H1 (cell line): ENCODE measurements at regions of chr11 and their contacts with region 1.

Region 1: GRCh38 chr11:82701847-82702520 is 31.7 kb downstream of the FAM181B start:
- DNase-seq: peak in 1 of 2 experiments; percentile 81
- H3K4me3 ChIP-seq: no peak overlapping the region
- H3K27ac ChIP-seq: no peak overlapping the region
- H3K4me1 ChIP-seq: peaks cover 0 to 5% (median 0%) of the 10 kb centered on the region in 4 experiments; a peak in 1 of 7 replicates
- H3K27me3 ChIP-seq: no peaks in the 10 kb centered on the region
- CTCF ChIP-seq: peak in 2 of 3 experiments; percentile 74 to 89; a peak in 3 of 4 replicates
- EP300 ChIP-seq: no peak
- POLR2A ChIP-seq: no peak
- RAD21 ChIP-seq: peak; percentile 79 to 81

Region 2: GRCh38 chr11:81644239-81644840 is 1057.6 kb before region 1 on chr11:
- CTCF ChIA-PET with region 1: interaction called, 23 read pairs
- POLR2A ChIA-PET with region 1: no interaction called
- DNase-seq: no peak
- H3K4me3 ChIP-seq: no peak overlapping the region
- H3K27ac ChIP-seq: no peak overlapping the region
- H3K4me1 ChIP-seq: peaks cover 0 to 9% (median 5%) of the 10 kb centered on the region in 4 experiments; a peak in 6 of 7 replicates
- H3K27me3 ChIP-seq: peaks cover 5 to 32% (median 21%) of the 10 kb centered on the region in 4 experiments
- CTCF ChIP-seq: peak in 2 of 3 experiments; percentile 74 to 95; a peak in 3 of 4 replicates
- EP300 ChIP-seq: no peak
- POLR2A ChIP-seq: no peak
- RAD21 ChIP-seq: peak; percentile 79 to 81

Region 3: GRCh38 chr11:82494988-82495432 is 207.0 kb before region 1 on chr11:
- CTCF ChIA-PET with region 1: interaction called, 80 read pairs
- POLR2A ChIA-PET with region 1: no interaction called
- DNase-seq: peak in 1 of 2 experiments; percentile 51
- H3K4me3 ChIP-seq: no peak overlapping the region
- H3K27ac ChIP-seq: peak overlapping the region; percentile 62; the same call in 1 of the 2 replicates
- H3K4me1 ChIP-seq: 0 out of 7 replicates have a peak, but pooled peaks cover 0 to 2% (median 0%) of the 10 kb centered on the region in 4 experiments
- H3K27me3 ChIP-seq: no peaks in the 10 kb centered on the region
- CTCF ChIP-seq: peak in 2 of 3 experiments; percentile 47 to 66; a peak in 3 of 4 replicates
- EP300 ChIP-seq: no peak
- POLR2A ChIP-seq: no peak
- RAD21 ChIP-seq: peak; percentile 58 to 64

Region 4: GRCh38 chr11:82676473-82677094 is 25.4 kb before region 1 on chr11:
- CTCF ChIA-PET with region 1: interaction called, 98 read pairs
- POLR2A ChIA-PET with region 1: no interaction called
- DNase-seq: no peak
- H3K4me3 ChIP-seq: no peak overlapping the region
- H3K27ac ChIP-seq: no peak overlapping the region
- H3K4me1 ChIP-seq: no peaks in the 10 kb centered on the region
- H3K27me3 ChIP-seq: no peaks in the 10 kb centered on the region
- CTCF ChIP-seq: peak in 1 of 3 experiments; percentile 42; a peak in 1 of 4 replicates
- EP300 ChIP-seq: no peak
- POLR2A ChIP-seq: no peak
- RAD21 ChIP-seq: no peak

Region 5: GRCh38 chr11:82682003-82682751 is 19.8 kb before region 1 on chr11:
- CTCF ChIA-PET with region 1: interaction called, 100 read pairs
- POLR2A ChIA-PET with region 1: no interaction called
- DNase-seq: no peak
- H3K4me3 ChIP-seq: no peak overlapping the region
- H3K27ac ChIP-seq: no peak overlapping the region
- H3K4me1 ChIP-seq: no peaks in the 10 kb centered on the region
- H3K27me3 ChIP-seq: no peaks in the 10 kb centered on the region
- CTCF ChIP-seq: peak in 2 of 3 experiments; percentile 57 to 69; a peak in 3 of 4 replicates
- EP300 ChIP-seq: no peak
- POLR2A ChIP-seq: no peak
- RAD21 ChIP-seq: peak; percentile 84

Region 6: DNA sequence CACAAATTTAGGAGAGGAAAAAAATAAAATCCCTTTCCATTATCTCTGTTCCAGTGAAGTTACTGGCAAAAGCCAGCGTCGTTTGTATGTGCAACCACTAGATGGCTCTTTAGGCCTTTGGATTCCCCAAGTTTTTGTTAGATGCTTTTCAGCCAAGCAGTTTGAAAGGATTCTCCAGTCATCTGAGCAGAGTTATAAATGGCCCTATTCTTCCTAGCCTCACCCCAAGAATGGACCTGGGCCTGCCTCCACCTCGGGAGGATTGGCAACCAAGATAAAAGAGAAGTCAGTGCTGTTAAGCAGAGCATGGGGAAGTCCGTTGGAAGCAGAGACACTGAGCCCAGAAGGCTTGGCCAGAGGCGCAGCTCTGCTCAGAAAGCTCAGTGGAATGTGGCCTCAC is 16.3 kb after region 1 on chr11:
- CTCF ChIA-PET with region 1: interaction called, 53 read pairs
- POLR2A ChIA-PET with region 1: no interaction called
- DNase-seq: peak in 1 of 2 experiments; percentile 54
- H3K4me3 ChIP-seq: no peak overlapping the region
- H3K27ac ChIP-seq: no peak overlapping the region
- H3K4me1 ChIP-seq: no peaks in the 10 kb centered on the region; a peak in 1 of 7 replicates
- H3K27me3 ChIP-seq: no peaks in the 10 kb centered on the region
- CTCF ChIP-seq: peak in 2 of 3 experiments; percentile 76 to 80; a peak in 3 of 4 replicates
- EP300 ChIP-seq: no peak
- POLR2A ChIP-seq: no peak
- RAD21 ChIP-seq: peak; percentile 79 to 87

Region 7: DNA sequence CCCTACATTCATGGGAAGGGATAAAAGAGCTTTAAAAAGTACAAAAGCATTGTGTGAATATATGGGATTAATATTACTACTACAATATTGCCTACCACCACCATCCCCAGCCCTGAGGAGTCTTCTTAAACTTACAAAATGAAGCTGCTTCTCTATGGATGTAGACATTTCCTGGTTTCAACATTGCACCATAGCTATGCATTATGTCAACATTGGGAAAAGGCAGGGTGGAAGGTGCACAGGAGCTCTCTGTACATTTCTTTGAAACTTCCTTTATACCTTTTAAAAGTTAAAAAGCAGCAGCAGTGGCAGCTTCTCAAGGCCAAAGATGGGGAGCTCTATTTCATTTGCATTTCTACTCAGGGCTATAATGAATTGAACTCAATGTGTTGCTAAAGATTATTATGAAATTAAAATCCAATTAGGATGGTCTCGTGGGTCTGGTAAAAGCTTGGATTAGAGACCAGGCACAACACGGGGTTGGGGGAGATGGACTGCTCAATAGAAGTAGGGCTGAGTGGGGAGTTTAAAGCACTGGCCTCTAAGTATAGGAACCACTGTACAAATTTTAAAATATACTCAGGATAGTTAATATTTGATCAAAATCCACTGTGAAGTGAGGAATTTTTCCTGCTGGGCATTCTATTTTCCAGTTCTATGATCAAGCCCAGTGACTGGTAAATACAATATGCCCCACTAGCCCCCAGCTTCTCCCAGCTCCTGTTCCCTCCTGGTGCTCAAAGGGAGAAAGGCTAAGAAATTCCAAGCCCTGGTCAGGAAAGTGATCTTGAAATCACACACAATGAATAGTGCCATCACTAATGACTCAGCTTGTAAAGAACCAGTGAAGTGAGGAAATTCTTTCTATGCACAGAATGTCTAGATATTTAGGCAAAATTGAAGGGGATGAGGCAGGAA is 946.9 kb after region 1 on chr11:
- CTCF ChIA-PET with region 1: no interaction called
- POLR2A ChIA-PET with region 1: no interaction called
- DNase-seq: no peak
- H3K4me3 ChIP-seq: no peak overlapping the region
- H3K27ac ChIP-seq: no peak overlapping the region
- H3K4me1 ChIP-seq: peaks cover 0 to 8% (median 3%) of the 10 kb centered on the region in 4 experiments; a peak in 2 of 7 replicates
- H3K27me3 ChIP-seq: no peaks in the 10 kb centered on the region
- CTCF ChIP-seq: no peak
- EP300 ChIP-seq: no peak
- POLR2A ChIP-seq: no peak
- RAD21 ChIP-seq: no peak